ENCODE measurements at regions of chr5 and their contacts with region 1.

Region 1: GRCh38 chr5:42950440-42951292 is 89.5 kb downstream of the ANXA2R start:
- DNase-seq: peak; percentile 83
- H3K4me3 Mint-ChIP-seq: peak overlapping the region; percentile 87
- H3K27ac Mint-ChIP-seq: peak overlapping the region; percentile 88
- H3K4me1 Mint-ChIP-seq: peaks cover 9% of the 10 kb centered on the region
- H3K27me3 Mint-ChIP-seq: no peaks in the 10 kb centered on the region

Region 2: GRCh38 chr5:42908509-42909488 is 41.9 kb before region 1 on chr5:
- CTCF ChIA-PET with region 1: interaction called, 32 read pairs
- intact Hi-C with region 1: loop called (anchors 1 kb)
- DNase-seq: peak; percentile 94
- H3K4me3 Mint-ChIP-seq: peak overlapping the region; percentile 92
- H3K27ac Mint-ChIP-seq: peak overlapping the region; percentile 75
- H3K4me1 Mint-ChIP-seq: peaks cover 10% of the 10 kb centered on the region
- H3K27me3 Mint-ChIP-seq: peaks cover 10% of the 10 kb centered on the region

Region 3: GRCh38 chr5:43008369-43009153 is 57.9 kb after region 1 on chr5:
- CTCF ChIA-PET with region 1: interaction called, 3 read pairs
- intact Hi-C with region 1: loop called (anchors 1 kb)
- DNase-seq: peak; percentile 93
- H3K4me3 Mint-ChIP-seq: peak overlapping the region; percentile 79
- H3K27ac Mint-ChIP-seq: peak overlapping the region; percentile 97
- H3K4me1 Mint-ChIP-seq: peaks cover 24% of the 10 kb centered on the region
- H3K27me3 Mint-ChIP-seq: no peaks in the 10 kb centered on the region

Region 4: GRCh38 chr5:43105369-43106289 is 155.0 kb after region 1 on chr5:
- CTCF ChIA-PET with region 1: no interaction called
- intact Hi-C with region 1: loop called (anchors 1 kb)
- DNase-seq: peak; percentile 92
- H3K4me3 Mint-ChIP-seq: peak overlapping the region; percentile 81
- H3K27ac Mint-ChIP-seq: peak overlapping the region; percentile 87
- H3K4me1 Mint-ChIP-seq: peaks cover 42% of the 10 kb centered on the region
- H3K27me3 Mint-ChIP-seq: no peaks in the 10 kb centered on the region

Measured in activated naive CD4-positive, alpha-beta T cell treated with anti-CD3 and anti-CD28 coated beads for 36 hours (primary cell).